ENCODE measurements at regions of chr1 and their contacts with region 1.

Region 1: GRCh38 chr1:107954719-107955415 is 10.1 kb downstream of the VAV3 start:
- DNase-seq: no peak
- H3K4me3 ChIP-seq: no peak overlapping the region
- H3K4me3 Mint-ChIP-seq: no peak overlapping the region
- H3K27ac ChIP-seq: no peak overlapping the region
- H3K27ac Mint-ChIP-seq: no peak overlapping the region
- H3K4me1 ChIP-seq: peaks cover 41 to 49% of the 10 kb centered on the region in 2 donors
- H3K4me1 Mint-ChIP-seq: peaks cover 46% of the 10 kb centered on the region
- H3K27me3 ChIP-seq: no peaks in the 10 kb centered on the region
- H3K27me3 Mint-ChIP-seq: no peaks in the 10 kb centered on the region
- CTCF ChIP-seq: no peak

Region 2: DNA sequence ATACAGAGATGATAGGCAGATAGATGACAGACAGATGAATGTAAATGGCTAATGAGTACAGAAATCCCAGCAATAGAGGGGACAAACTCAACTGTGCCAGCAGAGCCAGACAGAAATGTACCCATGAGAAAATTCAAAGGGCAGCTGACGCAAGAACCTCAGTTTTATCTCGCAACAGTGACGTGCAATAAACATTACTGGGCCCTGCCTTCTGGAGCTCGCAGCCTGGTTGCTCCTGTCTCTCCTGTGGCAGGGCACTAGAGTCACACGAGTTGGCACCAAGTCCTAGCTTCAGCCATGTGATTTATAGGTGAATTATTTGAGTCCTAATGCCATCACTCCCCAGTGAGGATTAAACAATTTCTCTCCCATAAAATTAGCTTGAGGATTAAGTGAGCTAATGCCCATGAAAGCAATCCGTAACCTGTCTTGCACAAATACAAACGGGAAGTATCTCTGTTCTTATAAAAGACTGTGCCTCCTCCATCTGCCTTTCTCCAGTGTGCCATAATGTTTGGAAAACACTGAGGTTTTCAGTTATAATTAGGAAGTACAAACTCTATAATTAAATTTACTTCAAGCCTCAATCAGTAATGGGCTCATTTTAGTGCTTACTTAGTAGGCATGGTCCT is 40.6 kb before region 1 on chr1:
- intact Hi-C with region 1: loop called in 1 of 2 experiments (anchors 5 kb)
- DNase-seq: peak; percentile 51 to 75 (median 69)
- H3K4me3 ChIP-seq: peak overlapping the region in 1 of 3 experiments; percentile 25
- H3K4me3 Mint-ChIP-seq: peak overlapping the region; percentile 21 to 63
- H3K27ac ChIP-seq: peak overlapping the region; percentile 43 to 77
- H3K27ac Mint-ChIP-seq: peak overlapping the region; percentile 78 to 94 (median 89)
- H3K4me1 ChIP-seq: peaks cover 12 to 16% of the 10 kb centered on the region in 2 donors
- H3K4me1 Mint-ChIP-seq: peaks cover 16% of the 10 kb centered on the region
- H3K27me3 ChIP-seq: no peaks in the 10 kb centered on the region
- H3K27me3 Mint-ChIP-seq: no peaks in the 10 kb centered on the region
- CTCF ChIP-seq: no peak